Cardiac septum (tissue), 1 donor: ENCODE measurements at regions of chr11 and their contacts with region 1.

Region 1: GRCh38 chr11:120952461-120953434 is 71.2 kb upstream of the TBCEL start:
- DNase-seq: no peak

Region 2: DNA sequence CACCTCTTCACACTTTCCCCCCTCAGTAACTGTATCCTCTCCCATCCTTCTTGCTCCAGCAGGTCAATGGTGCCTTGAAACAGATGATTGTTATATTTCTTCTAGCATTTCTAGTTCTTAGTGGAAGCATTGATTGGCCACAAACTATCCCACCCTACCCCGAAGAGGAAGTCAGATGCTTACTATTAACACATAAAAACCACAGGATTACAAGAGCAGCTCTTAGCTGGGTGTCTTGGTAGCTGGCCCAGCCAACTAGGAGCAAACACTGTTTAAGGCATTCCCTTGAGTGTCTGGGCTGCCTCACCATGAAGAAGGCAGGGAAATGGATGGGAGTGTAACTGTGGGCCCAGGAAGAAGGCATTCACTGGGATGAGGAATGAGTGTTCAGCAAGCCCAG is 264.6 kb before region 1 on chr11:
- intact Hi-C with region 1: loop called (anchors 5 kb)
- DNase-seq: no peak

Region 3: GRCh38 chr11:121112498-121113455 is 160.0 kb after region 1 on chr11:
- intact Hi-C with region 1: loop called (anchors 10 kb)
- DNase-seq: no peak

Region 4: GRCh38 chr11:121767433-121767832 is 814.7 kb after region 1 on chr11:
- intact Hi-C with region 1: no loop called
- DNase-seq: no peak